ENCODE measurements at regions of chr7 and their contacts with region 1.

Region 1: GRCh38 chr7:50418086-50418515 is 32.0 kb downstream of the FIGNL1 start:
- DNase-seq: peak; percentile 82
- ATAC-seq: peak; percentile 78
- H3K4me3 ChIP-seq: no peak overlapping the region
- H3K4me3 Mint-ChIP-seq: no peak overlapping the region
- H3K27ac ChIP-seq: no peak overlapping the region
- H3K27ac Mint-ChIP-seq: no peak overlapping the region
- H3K4me1 ChIP-seq: peaks cover 49 to 51% of the 10 kb centered on the region in 2 donors
- H3K4me1 Mint-ChIP-seq: peaks cover 54% of the 10 kb centered on the region
- H3K27me3 ChIP-seq: no peaks in the 10 kb centered on the region
- H3K27me3 Mint-ChIP-seq: no peaks in the 10 kb centered on the region
- CTCF ChIP-seq: peak; percentile 88

Region 2: DNA sequence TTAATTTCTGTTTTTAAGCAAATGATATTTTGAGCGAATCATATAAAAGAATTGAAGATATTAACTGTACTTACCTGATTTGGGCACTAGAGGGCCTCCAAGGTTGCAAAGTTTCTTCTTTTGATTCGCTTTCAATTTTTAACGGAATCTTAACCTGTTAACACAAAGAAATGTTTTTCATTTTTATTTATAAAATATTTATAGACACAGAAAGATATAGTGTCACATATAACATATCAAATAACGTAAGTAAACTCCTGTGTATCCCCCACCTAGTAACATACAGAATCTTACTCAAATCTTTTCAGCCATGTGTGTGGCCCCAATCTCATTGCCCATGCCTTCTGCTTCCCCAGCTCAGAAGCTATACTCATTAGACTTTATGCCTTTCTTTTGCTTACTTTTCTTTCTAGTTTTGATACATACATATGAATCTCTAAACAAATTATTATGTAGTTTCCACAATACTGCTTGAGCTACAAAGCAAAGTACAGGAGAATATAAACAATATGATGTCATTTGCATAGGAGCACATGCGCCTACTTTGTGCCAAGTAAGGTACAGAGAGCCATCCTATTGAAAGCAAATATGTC is 275.6 kb before region 1 on chr7:
- CTCF ChIA-PET with region 1: interaction called, 38 read pairs
- POLR2A ChIA-PET with region 1: no interaction called
- intact Hi-C with region 1: loop called (anchors 1 kb)
- DNase-seq: peak; percentile 71
- ATAC-seq: peak; percentile 71
- H3K4me3 ChIP-seq: peak overlapping the region in 4 of 5 experiments; percentile 8 to 33 (median 30)
- H3K4me3 Mint-ChIP-seq: peak overlapping the region; percentile 80
- H3K27ac ChIP-seq: peak overlapping the region in 1 of 2 donors; percentile 62
- H3K27ac Mint-ChIP-seq: peak overlapping the region; percentile 62
- H3K4me1 ChIP-seq: peaks cover 42 to 50% of the 10 kb centered on the region in 2 donors
- H3K4me1 Mint-ChIP-seq: peaks cover 49% of the 10 kb centered on the region
- H3K27me3 ChIP-seq: no peaks in the 10 kb centered on the region
- H3K27me3 Mint-ChIP-seq: no peaks in the 10 kb centered on the region
- CTCF ChIP-seq: peak; percentile 94

Region 3: DNA sequence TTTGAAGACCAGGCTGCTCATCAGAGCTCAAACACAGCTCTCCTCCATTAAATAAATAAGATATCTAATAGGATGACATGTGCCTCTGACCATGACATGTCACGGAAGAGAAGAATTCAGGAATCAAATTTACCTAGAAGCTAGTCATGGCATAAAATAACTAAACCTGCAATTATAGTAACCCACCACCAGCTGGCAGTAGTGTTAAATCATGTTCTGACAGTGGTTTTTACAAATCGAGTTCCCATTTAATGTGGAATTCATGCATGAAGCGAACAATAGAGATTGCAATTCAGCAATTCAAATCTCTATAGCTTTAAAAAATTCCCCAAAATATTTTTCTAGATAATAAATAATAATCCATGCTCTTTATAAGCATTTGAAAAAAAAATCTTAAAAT is 188.1 kb before region 1 on chr7:
- CTCF ChIA-PET with region 1: interaction called, 10 read pairs
- POLR2A ChIA-PET with region 1: no interaction called
- intact Hi-C with region 1: no loop called
- DNase-seq: peak; percentile 27
- ATAC-seq: no peak
- H3K4me3 ChIP-seq: no peak overlapping the region
- H3K4me3 Mint-ChIP-seq: no peak overlapping the region
- H3K27ac ChIP-seq: no peak overlapping the region
- H3K27ac Mint-ChIP-seq: no peak overlapping the region
- H3K4me1 ChIP-seq: no peaks in the 10 kb centered on the region
- H3K4me1 Mint-ChIP-seq: peaks cover 8% of the 10 kb centered on the region
- H3K27me3 ChIP-seq: no peaks in the 10 kb centered on the region
- H3K27me3 Mint-ChIP-seq: no peaks in the 10 kb centered on the region
- CTCF ChIP-seq: peak; percentile 66

Region 4: GRCh38 chr7:50317221-50317678 is 100.9 kb before region 1 on chr7:
- CTCF ChIA-PET with region 1: interaction called, 23 read pairs
- POLR2A ChIA-PET with region 1: no interaction called
- intact Hi-C with region 1: loop called (anchors 2 kb)
- DNase-seq: peak; percentile 86
- ATAC-seq: peak; percentile 74
- H3K4me3 ChIP-seq: peak overlapping the region in 1 of 5 experiments; percentile 37
- H3K4me3 Mint-ChIP-seq: peak overlapping the region; percentile 73
- H3K27ac ChIP-seq: peak overlapping the region; percentile 54 to 83
- H3K27ac Mint-ChIP-seq: peak overlapping the region; percentile 96
- H3K4me1 ChIP-seq: peaks cover 81 to 86% of the 10 kb centered on the region in 2 donors
- H3K4me1 Mint-ChIP-seq: peaks cover 93% of the 10 kb centered on the region
- H3K27me3 ChIP-seq: no peaks in the 10 kb centered on the region
- H3K27me3 Mint-ChIP-seq: no peaks in the 10 kb centered on the region
- CTCF ChIP-seq: peak; percentile 32

Region 5: DNA sequence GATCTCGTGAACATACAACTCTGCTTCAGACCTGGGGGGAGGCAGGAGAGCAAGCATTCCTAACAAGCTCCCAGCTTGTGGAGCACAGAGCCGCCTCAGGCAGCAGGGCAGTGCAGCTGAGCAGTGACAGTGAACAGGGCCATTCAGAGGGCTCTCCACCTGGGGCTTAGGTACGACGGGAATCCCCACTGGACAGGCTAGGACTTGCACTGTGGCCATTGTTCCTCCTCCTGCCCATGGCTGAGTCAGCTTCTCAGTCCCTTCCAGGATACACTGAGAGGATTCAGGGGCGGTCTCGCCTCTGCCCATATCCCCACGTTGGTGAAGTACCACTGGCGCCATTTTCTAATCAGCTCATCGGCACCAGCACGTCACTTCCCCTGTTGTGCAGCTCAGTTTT is 39.0 kb before region 1 on chr7:
- CTCF ChIA-PET with region 1: interaction called, 182 read pairs
- POLR2A ChIA-PET with region 1: interaction called, 3 read pairs
- intact Hi-C with region 1: no loop called
- DNase-seq: no peak
- ATAC-seq: no peak
- H3K4me3 ChIP-seq: no peak overlapping the region
- H3K4me3 Mint-ChIP-seq: no peak overlapping the region
- H3K27ac ChIP-seq: peak overlapping the region in 1 of 2 donors; percentile 73
- H3K27ac Mint-ChIP-seq: peak overlapping the region; percentile 79
- H3K4me1 ChIP-seq: peaks cover 43 to 46% of the 10 kb centered on the region in 2 donors
- H3K4me1 Mint-ChIP-seq: peaks cover 76% of the 10 kb centered on the region
- H3K27me3 ChIP-seq: no peaks in the 10 kb centered on the region
- H3K27me3 Mint-ChIP-seq: no peaks in the 10 kb centered on the region
- CTCF ChIP-seq: no peak

Region 6: DNA sequence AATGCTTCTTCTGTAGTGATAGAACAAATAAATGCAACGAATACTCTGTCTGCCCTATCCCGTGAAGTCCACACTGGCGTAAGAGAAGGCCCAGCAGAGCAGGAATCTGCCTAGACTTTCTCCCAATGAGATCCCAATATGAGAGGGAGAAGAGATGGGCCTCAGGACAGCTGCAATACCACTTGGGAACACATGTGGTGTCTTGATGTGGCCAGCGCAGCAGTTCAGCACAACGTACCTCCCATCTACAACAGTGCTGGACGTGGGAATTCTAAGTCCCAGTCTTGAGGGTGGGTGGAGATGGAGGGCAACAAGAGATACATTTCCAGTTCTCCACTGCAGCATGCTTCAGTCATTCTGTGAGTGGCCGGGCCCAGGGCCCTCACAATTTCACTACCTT is 13.7 kb before region 1 on chr7:
- CTCF ChIA-PET with region 1: interaction called, 39 read pairs
- POLR2A ChIA-PET with region 1: interaction called, 25 read pairs
- intact Hi-C with region 1: no loop called
- DNase-seq: no peak
- ATAC-seq: no peak
- H3K4me3 ChIP-seq: no peak overlapping the region
- H3K4me3 Mint-ChIP-seq: peak overlapping the region; percentile 18
- H3K27ac ChIP-seq: peak overlapping the region; percentile 75 to 94
- H3K27ac Mint-ChIP-seq: peak overlapping the region; percentile 99
- H3K4me1 ChIP-seq: peaks cover 62 to 72% of the 10 kb centered on the region in 2 donors
- H3K4me1 Mint-ChIP-seq: peaks cover 91% of the 10 kb centered on the region
- H3K27me3 ChIP-seq: no peaks in the 10 kb centered on the region
- H3K27me3 Mint-ChIP-seq: no peaks in the 10 kb centered on the region
- CTCF ChIP-seq: no peak

Measured in B cell (primary cell).